H1 (cell line): ENCODE measurements at regions of chr1 and their contacts with region 1.

Region 1: GRCh38 chr1:113928941-113929749 is at the start of gene HIPK1:
- DNase-seq: peak; percentile 59 to 96
- H3K4me3 ChIP-seq: peak within 1 kb of the TSS; percentile 91 to 99 (median 94)
- H3K27ac ChIP-seq: peak within 1 kb of the TSS; percentile 43; the same call in 1 of the 2 replicates
- H3K4me1 ChIP-seq: peaks cover 0 to 4% (median under 1%) of the 10 kb centered on the region in 4 experiments; a peak in 4 of 7 replicates
- H3K27me3 ChIP-seq: no peaks in the 10 kb centered on the region
- CTCF ChIP-seq: no peak
- EP300 ChIP-seq: no peak; a peak in 1 of 3 replicates
- POLR2A ChIP-seq: no peak
- RAD21 ChIP-seq: no peak; a peak in 1 of 4 replicates
- total RNA-seq, gene HIPK1: 63.0 and 64.3 TPM in 2 replicates

Region 2: DNA sequence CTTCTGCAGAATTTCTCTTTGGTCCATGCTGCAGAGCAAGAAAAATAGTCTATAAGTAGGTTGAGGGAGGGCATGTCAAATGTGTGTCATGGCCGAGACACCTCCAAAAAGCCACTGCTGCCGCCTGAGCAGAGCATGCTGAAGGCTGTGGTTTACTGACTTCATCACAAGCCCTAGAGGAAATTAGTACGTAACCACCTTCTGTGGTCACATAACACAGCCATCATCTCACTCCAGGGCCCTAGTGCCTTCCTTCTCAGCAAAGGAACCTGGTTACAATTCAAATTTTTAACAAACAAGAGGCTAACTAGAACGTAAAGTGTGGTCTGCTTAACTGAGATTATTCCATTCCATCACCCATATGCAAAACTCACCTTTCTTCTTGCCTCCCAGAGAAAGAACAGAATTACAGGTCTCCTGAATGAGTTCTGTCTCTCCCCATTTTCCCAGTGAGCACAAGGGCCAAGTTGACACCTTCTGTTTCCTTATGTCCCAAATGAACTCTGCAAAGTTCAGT is 57.5 kb before region 1 on chr1 and contains the start of gene PTPN22:
- CTCF ChIA-PET with region 1: no interaction called
- POLR2A ChIA-PET with region 1: no interaction called
- DNase-seq: no peak
- H3K4me3 ChIP-seq: no peak within 1 kb of the TSS
- H3K27ac ChIP-seq: no peak within 1 kb of the TSS
- H3K4me1 ChIP-seq: no peaks in the 10 kb centered on the region
- H3K27me3 ChIP-seq: no peaks in the 10 kb centered on the region
- CTCF ChIP-seq: no peak
- EP300 ChIP-seq: no peak
- POLR2A ChIP-seq: no peak
- RAD21 ChIP-seq: no peak
- total RNA-seq, gene PTPN22: not detected in 2 replicates

Region 3: DNA sequence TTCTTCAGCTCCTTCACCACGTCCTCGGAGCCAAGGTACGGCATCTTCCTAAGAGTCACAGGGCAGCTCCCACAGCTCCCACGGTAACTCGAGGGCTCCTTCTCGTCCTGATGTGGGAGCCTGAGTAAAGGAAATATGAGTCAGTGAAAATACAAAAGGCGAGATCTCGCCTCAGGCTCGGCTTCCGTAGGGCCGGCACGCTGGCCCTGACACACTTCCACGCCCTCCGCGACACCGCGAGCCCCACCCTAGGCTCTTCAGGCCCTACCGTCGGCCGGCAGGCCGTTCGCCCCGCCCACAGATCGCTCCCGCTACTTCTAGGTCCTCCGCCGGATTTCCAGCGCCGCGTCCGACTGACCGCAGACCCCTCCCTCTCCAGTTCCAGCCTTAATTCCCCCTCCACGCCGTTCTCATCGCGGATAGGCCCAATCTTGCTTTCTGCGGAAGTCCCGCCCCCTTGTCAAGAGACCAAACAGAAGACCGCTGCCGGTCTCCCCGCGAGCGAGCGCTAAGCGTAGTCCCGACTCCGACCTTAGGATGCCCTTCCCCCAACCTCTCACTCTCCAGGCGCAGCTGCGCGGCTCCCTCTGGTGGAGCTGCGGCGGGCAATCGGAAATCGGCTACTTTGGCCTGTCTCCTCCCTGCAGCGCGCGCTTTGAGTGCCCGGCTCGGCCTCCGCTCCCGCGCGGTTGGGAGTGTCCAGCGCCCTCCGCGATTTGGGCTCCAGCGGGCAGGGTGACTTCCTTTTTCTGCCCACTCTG is 24.3 kb before region 1 on chr1 and contains the starts of genes AP4B1 and DCLRE1B:
- CTCF ChIA-PET with region 1: interaction called, 20 read pairs
- POLR2A ChIA-PET with region 1: interaction called, 66 read pairs
- DNase-seq: peak; percentile 94 to 99
- H3K4me3 ChIP-seq: peak within 1 kb of the TSS; percentile 73 to 99 (median 92)
- H3K27ac ChIP-seq: peak within 1 kb of the TSS; percentile 40; the same call in 1 of the 2 replicates
- H3K4me1 ChIP-seq: peaks cover 0 to 3% (median under 1%) of the 10 kb centered on the region in 4 experiments; a peak in 5 of 7 replicates
- H3K27me3 ChIP-seq: no peaks in the 10 kb centered on the region
- CTCF ChIP-seq: peak; percentile 32 to 47 (median 39); a peak in 2 of 4 replicates
- EP300 ChIP-seq: peak in 1 of 2 experiments; percentile 83; a peak in 1 of 3 replicates
- POLR2A ChIP-seq: peak in 1 of 2 experiments; percentile 31; a peak in 1 of 3 replicates
- RAD21 ChIP-seq: peak; percentile 45 to 55; a peak in 3 of 4 replicates
- total RNA-seq, gene AP4B1: 8.9 and 11.7 TPM in 2 replicates
- total RNA-seq, gene DCLRE1B: 11.0 TPM in 2 replicates

Region 4: DNA sequence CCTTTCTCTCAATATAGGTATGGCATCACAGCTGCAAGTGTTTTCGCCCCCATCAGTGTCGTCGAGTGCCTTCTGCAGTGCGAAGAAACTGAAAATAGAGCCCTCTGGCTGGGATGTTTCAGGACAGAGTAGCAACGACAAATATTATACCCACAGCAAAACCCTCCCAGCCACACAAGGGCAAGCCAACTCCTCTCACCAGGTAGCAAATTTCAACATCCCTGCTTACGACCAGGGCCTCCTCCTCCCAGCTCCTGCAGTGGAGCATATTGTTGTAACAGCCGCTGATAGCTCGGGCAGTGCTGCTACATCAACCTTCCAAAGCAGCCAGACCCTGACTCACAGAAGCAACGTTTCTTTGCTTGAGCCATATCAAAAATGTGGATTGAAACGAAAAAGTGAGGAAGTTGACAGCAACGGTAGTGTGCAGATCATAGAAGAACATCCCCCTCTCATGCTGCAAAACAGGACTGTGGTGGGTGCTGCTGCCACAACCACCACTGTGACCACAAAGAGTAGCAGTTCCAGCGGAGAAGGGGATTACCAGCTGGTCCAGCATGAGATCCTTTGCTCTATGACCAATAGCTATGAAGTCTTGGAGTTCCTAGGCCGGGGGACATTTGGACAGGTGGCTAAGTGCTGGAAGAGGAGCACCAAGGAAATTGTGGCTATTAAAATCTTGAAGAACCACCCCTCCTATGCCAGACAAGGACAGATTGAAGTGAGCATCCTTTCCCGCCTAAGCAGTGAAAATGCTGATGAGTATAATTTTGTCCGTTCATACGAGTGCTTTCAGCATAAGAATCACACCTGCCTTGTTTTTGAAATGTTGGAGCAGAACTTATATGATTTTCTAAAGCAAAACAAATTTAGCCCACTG is 11.5 kb after region 1 on chr1:
- CTCF ChIA-PET with region 1: interaction called, 4 read pairs
- POLR2A ChIA-PET with region 1: interaction called, 15 read pairs
- DNase-seq: no peak
- H3K4me3 ChIP-seq: no peak overlapping the region
- H3K27ac ChIP-seq: no peak overlapping the region
- H3K4me1 ChIP-seq: peaks cover 0 to 3% (median 0%) of the 10 kb centered on the region in 4 experiments; a peak in 3 of 7 replicates
- H3K27me3 ChIP-seq: no peaks in the 10 kb centered on the region
- CTCF ChIP-seq: no peak
- EP300 ChIP-seq: no peak
- POLR2A ChIP-seq: no peak
- RAD21 ChIP-seq: no peak